ENCODE measurements at regions of chr10 and their contacts with region 1.

Region 1: GRCh38 chr10:114103284-114103683 is 59.6 kb downstream of the ADRB1 start:
- DNase-seq: peak; percentile 61
- ATAC-seq: no peak
- H3K4me3 ChIP-seq: no peak overlapping the region
- H3K4me3 Mint-ChIP-seq: no peak overlapping the region
- H3K27ac ChIP-seq: no peak overlapping the region
- H3K27ac Mint-ChIP-seq: no peak overlapping the region
- H3K4me1 ChIP-seq: peaks cover 34 to 38% of the 10 kb centered on the region in 2 donors
- H3K4me1 Mint-ChIP-seq: peaks cover 37% of the 10 kb centered on the region
- H3K27me3 ChIP-seq: peaks cover 0 to 20% (median 9%) of the 10 kb centered on the region in 4 experiments
- H3K27me3 Mint-ChIP-seq: peaks cover 22% of the 10 kb centered on the region
- CTCF ChIP-seq: peak; percentile 47

Region 2: GRCh38 chr10:113704637-113705343 is 398.5 kb before region 1 on chr10:
- CTCF ChIA-PET with region 1: interaction called, 18 read pairs
- POLR2A ChIA-PET with region 1: no interaction called
- intact Hi-C with region 1: no loop called
- DNase-seq: peak; percentile 44
- ATAC-seq: no peak
- H3K4me3 ChIP-seq: no peak overlapping the region
- H3K4me3 Mint-ChIP-seq: no peak overlapping the region
- H3K27ac ChIP-seq: no peak overlapping the region
- H3K27ac Mint-ChIP-seq: no peak overlapping the region
- H3K4me1 ChIP-seq: no peaks in the 10 kb centered on the region
- H3K4me1 Mint-ChIP-seq: peaks cover 18% of the 10 kb centered on the region
- H3K27me3 ChIP-seq: no peaks in the 10 kb centered on the region
- H3K27me3 Mint-ChIP-seq: no peaks in the 10 kb centered on the region
- CTCF ChIP-seq: peak; percentile 70

Region 3: GRCh38 chr10:113802997-113803396 is 300.3 kb before region 1 on chr10:
- CTCF ChIA-PET with region 1: interaction called, 242 read pairs
- POLR2A ChIA-PET with region 1: no interaction called
- intact Hi-C with region 1: loop called (anchors 1 kb)
- DNase-seq: peak; percentile 12
- ATAC-seq: no peak
- H3K4me3 ChIP-seq: no peak overlapping the region
- H3K4me3 Mint-ChIP-seq: no peak overlapping the region
- H3K27ac ChIP-seq: no peak overlapping the region
- H3K27ac Mint-ChIP-seq: no peak overlapping the region
- H3K4me1 ChIP-seq: peaks cover 3 to 5% of the 10 kb centered on the region in 2 donors
- H3K4me1 Mint-ChIP-seq: peaks cover 4% of the 10 kb centered on the region
- H3K27me3 ChIP-seq: peaks cover 0 to 3% (median 0%) of the 10 kb centered on the region in 4 experiments
- H3K27me3 Mint-ChIP-seq: peaks cover 10% of the 10 kb centered on the region
- CTCF ChIP-seq: no peak

Region 4: GRCh38 chr10:113872139-113873030 is 230.9 kb before region 1 on chr10:
- CTCF ChIA-PET with region 1: interaction called, 6 read pairs
- POLR2A ChIA-PET with region 1: no interaction called
- intact Hi-C with region 1: loop called (anchors 2 kb)
- DNase-seq: no peak
- ATAC-seq: no peak
- H3K4me3 ChIP-seq: no peak overlapping the region
- H3K4me3 Mint-ChIP-seq: no peak overlapping the region
- H3K27ac ChIP-seq: no peak overlapping the region
- H3K27ac Mint-ChIP-seq: no peak overlapping the region
- H3K4me1 ChIP-seq: no peaks in the 10 kb centered on the region
- H3K4me1 Mint-ChIP-seq: peaks cover 27% of the 10 kb centered on the region
- H3K27me3 ChIP-seq: no peaks in the 10 kb centered on the region
- H3K27me3 Mint-ChIP-seq: no peaks in the 10 kb centered on the region
- CTCF ChIP-seq: no peak

Region 5: GRCh38 chr10:113927344-113927831 is 175.9 kb before region 1 on chr10:
- CTCF ChIA-PET with region 1: no interaction called
- POLR2A ChIA-PET with region 1: no interaction called
- intact Hi-C with region 1: no loop called
- DNase-seq: no peak
- ATAC-seq: no peak
- H3K4me3 ChIP-seq: no peak overlapping the region
- H3K4me3 Mint-ChIP-seq: no peak overlapping the region
- H3K27ac ChIP-seq: no peak overlapping the region
- H3K27ac Mint-ChIP-seq: no peak overlapping the region
- H3K4me1 ChIP-seq: no peaks in the 10 kb centered on the region
- H3K4me1 Mint-ChIP-seq: no peaks in the 10 kb centered on the region
- H3K27me3 ChIP-seq: peaks cover 0 to 4% (median 0%) of the 10 kb centered on the region in 4 experiments
- H3K27me3 Mint-ChIP-seq: peaks cover 26% of the 10 kb centered on the region
- CTCF ChIP-seq: no peak

Region 6: DNA sequence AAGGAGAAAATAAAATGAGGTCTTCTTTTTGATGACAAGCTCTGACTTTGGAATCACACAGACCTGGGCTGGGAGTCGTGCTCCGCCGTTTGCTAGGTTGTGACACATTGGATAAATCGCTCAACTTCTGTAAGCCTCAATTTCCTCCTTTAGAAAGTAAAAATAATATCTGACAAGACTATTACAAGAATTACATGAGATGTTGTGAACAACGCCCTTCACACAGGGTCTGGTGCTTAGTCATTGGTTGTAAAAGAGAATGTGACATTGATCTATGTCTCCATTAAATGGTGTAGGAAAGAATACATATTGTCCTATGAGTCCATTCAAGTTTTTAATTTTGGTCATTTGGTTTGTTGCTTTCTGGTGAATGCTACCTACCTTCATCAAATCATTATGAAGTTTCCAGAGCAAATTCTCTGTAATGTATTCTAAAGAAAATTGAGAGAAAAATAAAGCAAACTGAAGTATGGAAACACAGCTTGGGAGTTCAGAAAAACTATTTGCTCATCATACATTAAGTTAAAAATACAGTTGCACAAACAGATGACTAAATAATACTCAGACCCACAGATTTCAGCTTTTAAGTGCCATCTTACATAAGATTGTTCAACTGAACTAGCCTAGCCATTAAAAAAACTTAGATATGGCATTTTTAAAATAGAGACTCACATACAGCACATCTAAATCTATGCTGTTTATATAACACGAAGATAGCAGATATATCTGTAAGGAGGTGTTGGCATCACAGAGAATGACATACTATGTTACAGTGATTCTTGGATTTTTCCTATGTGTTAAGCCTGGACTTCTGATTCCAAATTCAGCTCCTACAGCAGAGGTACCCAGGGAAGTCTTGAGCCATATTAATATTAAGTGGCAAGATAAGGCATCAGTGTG is 72.0 kb before region 1 on chr10:
- CTCF ChIA-PET with region 1: no interaction called
- POLR2A ChIA-PET with region 1: no interaction called
- intact Hi-C with region 1: no loop called
- DNase-seq: no peak
- ATAC-seq: no peak
- H3K4me3 ChIP-seq: no peak overlapping the region
- H3K4me3 Mint-ChIP-seq: no peak overlapping the region
- H3K27ac ChIP-seq: no peak overlapping the region
- H3K27ac Mint-ChIP-seq: no peak overlapping the region
- H3K4me1 ChIP-seq: peaks cover 2 to 3% of the 10 kb centered on the region in 2 donors
- H3K4me1 Mint-ChIP-seq: peaks cover 7% of the 10 kb centered on the region
- H3K27me3 ChIP-seq: no peaks in the 10 kb centered on the region
- H3K27me3 Mint-ChIP-seq: no peaks in the 10 kb centered on the region
- CTCF ChIP-seq: no peak

Region 7: GRCh38 chr10:114115661-114116445 is 12.6 kb after region 1 on chr10:
- CTCF ChIA-PET with region 1: interaction called, 15 read pairs
- POLR2A ChIA-PET with region 1: no interaction called
- intact Hi-C with region 1: no loop called
- DNase-seq: no peak
- ATAC-seq: no peak
- H3K4me3 ChIP-seq: no peak overlapping the region
- H3K4me3 Mint-ChIP-seq: no peak overlapping the region
- H3K27ac ChIP-seq: no peak overlapping the region
- H3K27ac Mint-ChIP-seq: no peak overlapping the region
- H3K4me1 ChIP-seq: no peaks in the 10 kb centered on the region
- H3K4me1 Mint-ChIP-seq: no peaks in the 10 kb centered on the region
- H3K27me3 ChIP-seq: no peaks in the 10 kb centered on the region
- H3K27me3 Mint-ChIP-seq: peaks cover 7% of the 10 kb centered on the region
- CTCF ChIP-seq: no peak

Measured in B cell (primary cell).